ENCODE measurements at regions of chr17 and their contacts with region 1.

Region 1: GRCh38 chr17:2054512-2055291 is at the start of gene HIC1:
- DNase-seq: peak; percentile 65 to 76 (median 74)
- H3K4me3 ChIP-seq: peak within 1 kb of the TSS; percentile 7 to 78 (median 61)
- H3K4me3 Mint-ChIP-seq: peak within 1 kb of the TSS; percentile 67 to 82
- H3K27ac ChIP-seq: no peak within 1 kb of the TSS
- H3K27ac Mint-ChIP-seq: peak within 1 kb of the TSS in 2 of 7 donors; percentile 2 to 75
- H3K4me1 ChIP-seq: peaks cover 41 to 83% of the 10 kb centered on the region in 2 donors
- H3K4me1 Mint-ChIP-seq: peaks cover 33% of the 10 kb centered on the region
- H3K27me3 ChIP-seq: peaks cover 36 to 52% of the 10 kb centered on the region in 2 donors
- H3K27me3 Mint-ChIP-seq: peaks cover 35 to 75% (median 49%) of the 10 kb centered on the region in 3 donors
- CTCF ChIP-seq: peak; percentile 97
- polyA plus RNA-seq, gene HIC1: 0.13 to 14.2 (median 0.30) TPM

Region 2: GRCh38 chr17:2017274-2017941 is 37.3 kb before region 1 on chr17:
- intact Hi-C with region 1: no loop called
- DNase-seq: no peak
- H3K4me3 ChIP-seq: no peak overlapping the region
- H3K4me3 Mint-ChIP-seq: no peak overlapping the region
- H3K27ac ChIP-seq: no peak overlapping the region
- H3K27ac Mint-ChIP-seq: no peak overlapping the region
- H3K4me1 ChIP-seq: no peaks in the 10 kb centered on the region
- H3K4me1 Mint-ChIP-seq: peaks cover under 1% of the 10 kb centered on the region
- H3K27me3 ChIP-seq: peaks cover 2 to 25% of the 10 kb centered on the region in 2 donors
- H3K27me3 Mint-ChIP-seq: peaks cover 14 to 49% (median 32%) of the 10 kb centered on the region in 3 donors
- CTCF ChIP-seq: no peak

Region 3: DNA sequence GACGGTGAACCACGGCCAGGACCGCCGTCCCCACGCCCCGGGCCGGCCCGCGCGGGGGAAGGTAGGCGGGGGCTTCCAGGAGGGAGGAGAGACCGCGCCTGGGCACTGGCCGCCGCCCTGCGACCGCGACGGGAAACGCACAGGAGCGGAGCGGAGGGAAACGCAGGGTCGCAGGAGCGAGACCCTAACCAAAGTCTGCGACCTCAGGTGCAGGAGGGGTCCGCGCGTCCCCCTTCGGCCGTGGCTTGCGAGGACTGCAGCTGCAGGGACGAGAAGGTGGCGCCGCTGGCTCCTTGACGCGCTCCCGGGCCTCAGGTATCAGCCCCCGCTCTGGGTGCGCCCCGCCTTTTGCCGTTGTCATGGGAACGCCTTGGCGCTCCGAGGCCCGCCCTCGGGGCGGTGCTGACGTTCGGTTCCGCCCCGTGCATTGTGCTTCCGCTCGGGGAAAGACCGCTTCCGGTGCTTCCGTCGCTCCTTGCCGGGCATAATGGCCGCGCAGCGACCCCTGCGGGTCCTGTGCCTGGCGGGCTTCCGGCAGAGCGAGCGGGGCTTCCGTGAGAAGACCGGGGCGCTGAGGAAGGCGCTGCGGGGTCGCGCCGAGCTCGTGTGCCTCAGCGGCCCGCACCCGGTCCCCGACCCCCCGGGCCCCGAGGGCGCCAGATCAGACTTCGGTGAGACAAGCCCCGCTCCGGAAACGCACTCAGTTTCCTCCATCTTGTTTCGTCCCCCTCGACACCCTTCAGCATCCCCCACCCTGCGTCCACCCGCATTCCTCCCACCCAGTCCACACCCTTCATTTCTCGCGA is 12.9 kb before region 1 on chr17 and contains the start of gene OVCA2:
- intact Hi-C with region 1: no loop called
- DNase-seq: peak; percentile 89 to 91 (median 90)
- H3K4me3 ChIP-seq: peak within 1 kb of the TSS; percentile 72 to 88 (median 79)
- H3K4me3 Mint-ChIP-seq: peak within 1 kb of the TSS; percentile 89 to 96
- H3K27ac ChIP-seq: peak within 1 kb of the TSS; percentile 41 to 85
- H3K27ac Mint-ChIP-seq: peak within 1 kb of the TSS; percentile 76 to 98 (median 95)
- H3K4me1 ChIP-seq: peaks cover 15 to 18% of the 10 kb centered on the region in 2 donors
- H3K4me1 Mint-ChIP-seq: peaks cover 15% of the 10 kb centered on the region
- H3K27me3 ChIP-seq: no peaks in the 10 kb centered on the region
- H3K27me3 Mint-ChIP-seq: peaks cover 3 to 5% (median 4%) of the 10 kb centered on the region in 3 donors
- CTCF ChIP-seq: peak; percentile 41
- polyA plus RNA-seq, gene OVCA2: 30.5 to 94.9 (median 69.1) TPM

Region 4: GRCh38 chr17:2087597-2088211 is 33.0 kb after region 1 on chr17:
- intact Hi-C with region 1: loop called in 1 of 2 experiments (anchors 2 kb)
- DNase-seq: peak; percentile 96 to 99 (median 98)
- H3K4me3 ChIP-seq: peak overlapping the region in 1 of 3 experiments; percentile 74
- H3K4me3 Mint-ChIP-seq: peak overlapping the region; percentile 58 to 76
- H3K27ac ChIP-seq: peak overlapping the region; percentile 78 to 83
- H3K27ac Mint-ChIP-seq: peak overlapping the region; percentile 60 to 93 (median 89)
- H3K4me1 ChIP-seq: peaks cover 78 to 84% of the 10 kb centered on the region in 2 donors
- H3K4me1 Mint-ChIP-seq: peaks cover 82% of the 10 kb centered on the region
- H3K27me3 ChIP-seq: peaks cover 0 to 6% of the 10 kb centered on the region in 2 donors
- H3K27me3 Mint-ChIP-seq: peaks cover 11 to 35% (median 35%) of the 10 kb centered on the region in 3 donors
- CTCF ChIP-seq: no peak

Region 5: DNA sequence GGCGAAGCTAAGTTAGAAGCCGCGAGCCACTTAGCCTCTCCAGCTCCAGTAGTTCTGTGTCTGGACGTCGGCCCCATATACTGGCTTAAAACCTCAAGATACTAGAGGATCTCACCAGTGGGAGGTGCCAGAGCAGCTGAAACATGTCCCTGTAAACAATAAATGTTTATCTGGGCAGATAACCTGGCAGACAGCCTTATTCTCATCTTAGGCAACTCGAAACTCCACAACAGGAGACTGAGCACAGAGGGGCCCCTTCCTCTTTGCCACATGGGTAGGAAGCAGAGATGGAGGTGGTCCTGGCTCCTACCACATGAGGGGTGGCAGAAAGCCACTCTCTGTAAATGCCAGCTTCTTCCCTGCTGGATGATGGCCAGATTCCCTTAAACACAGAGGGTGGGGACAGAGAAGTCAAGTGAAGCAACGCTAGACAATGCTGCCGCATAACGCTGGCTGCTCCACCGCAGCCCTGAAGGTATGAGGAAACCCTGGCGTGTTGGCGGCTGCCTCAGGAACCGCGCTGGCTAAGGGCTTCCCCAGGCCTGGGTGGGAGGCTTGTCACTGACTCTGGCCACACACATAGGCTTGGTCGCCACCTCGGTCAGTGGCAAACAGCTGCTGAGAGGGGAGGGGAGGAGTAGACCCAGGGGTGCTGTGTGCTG is 68.1 kb after region 1 on chr17:
- intact Hi-C with region 1: loop called (anchors 5 kb)
- DNase-seq: peak; percentile 88 to 95 (median 91)
- H3K4me3 ChIP-seq: peak overlapping the region in 1 of 3 experiments; percentile 59
- H3K4me3 Mint-ChIP-seq: peak overlapping the region; percentile 59 to 92
- H3K27ac ChIP-seq: peak overlapping the region; percentile 57 to 85
- H3K27ac Mint-ChIP-seq: peak overlapping the region; percentile 71 to 95 (median 94)
- H3K4me1 ChIP-seq: peaks cover 52 to 54% of the 10 kb centered on the region in 2 donors
- H3K4me1 Mint-ChIP-seq: peaks cover 50% of the 10 kb centered on the region
- H3K27me3 ChIP-seq: no peaks in the 10 kb centered on the region
- H3K27me3 Mint-ChIP-seq: no peaks in the 10 kb centered on the region
- CTCF ChIP-seq: no peak

Region 6: GRCh38 chr17:2157675-2158395 is 103.1 kb after region 1 on chr17:
- intact Hi-C with region 1: loop called (anchors 5 to 10 kb)
- DNase-seq: peak; percentile 85 to 98 (median 95)
- H3K4me3 ChIP-seq: peak overlapping the region in 2 of 3 experiments; percentile 15 to 53
- H3K4me3 Mint-ChIP-seq: peak overlapping the region; percentile 48 to 67
- H3K27ac ChIP-seq: peak overlapping the region; percentile 64 to 95
- H3K27ac Mint-ChIP-seq: peak overlapping the region; percentile 92 to 99 (median 95)
- H3K4me1 ChIP-seq: peaks cover 38 to 42% of the 10 kb centered on the region in 2 donors
- H3K4me1 Mint-ChIP-seq: peaks cover 42% of the 10 kb centered on the region
- H3K27me3 ChIP-seq: no peaks in the 10 kb centered on the region
- H3K27me3 Mint-ChIP-seq: peaks cover 0 to 2% (median 2%) of the 10 kb centered on the region in 3 donors
- CTCF ChIP-seq: no peak

Region 7: GRCh38 chr17:2244545-2245525 is 190.1 kb after region 1 on chr17:
- intact Hi-C with region 1: loop called (anchors 1 kb)
- DNase-seq: peak; percentile 68 to 79 (median 77)
- H3K4me3 ChIP-seq: no peak overlapping the region
- H3K4me3 Mint-ChIP-seq: no peak overlapping the region
- H3K27ac ChIP-seq: no peak overlapping the region
- H3K27ac Mint-ChIP-seq: no peak overlapping the region
- H3K4me1 ChIP-seq: no peaks in the 10 kb centered on the region
- H3K4me1 Mint-ChIP-seq: no peaks in the 10 kb centered on the region
- H3K27me3 ChIP-seq: no peaks in the 10 kb centered on the region
- H3K27me3 Mint-ChIP-seq: no peaks in the 10 kb centered on the region
- CTCF ChIP-seq: peak; percentile 93

Region 8: DNA sequence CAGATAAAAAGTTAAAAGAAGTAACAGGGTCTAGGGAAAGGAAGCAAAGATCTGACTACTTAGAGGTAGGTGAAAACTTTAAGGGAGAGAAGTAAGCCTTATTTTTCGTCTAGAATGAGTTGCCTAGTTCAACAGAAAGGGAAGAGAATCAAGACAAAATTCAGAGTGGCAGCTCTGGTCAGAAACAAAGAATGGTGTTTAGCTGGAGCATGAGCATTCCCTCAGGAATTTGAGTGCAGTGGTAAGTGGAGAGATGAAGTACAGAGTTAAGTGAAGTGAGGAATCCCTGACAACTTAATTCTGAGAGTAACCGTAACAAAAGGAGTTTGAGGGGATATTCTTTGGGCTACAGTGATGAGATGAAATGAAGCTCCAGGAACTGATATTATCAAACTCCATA is 237.4 kb after region 1 on chr17:
- intact Hi-C with region 1: loop called in 1 of 2 experiments (anchors 5 kb)
- DNase-seq: no peak
- H3K4me3 ChIP-seq: no peak overlapping the region
- H3K4me3 Mint-ChIP-seq: no peak overlapping the region
- H3K27ac ChIP-seq: no peak overlapping the region
- H3K27ac Mint-ChIP-seq: no peak overlapping the region
- H3K4me1 ChIP-seq: no peaks in the 10 kb centered on the region
- H3K4me1 Mint-ChIP-seq: no peaks in the 10 kb centered on the region
- H3K27me3 ChIP-seq: no peaks in the 10 kb centered on the region
- H3K27me3 Mint-ChIP-seq: peaks cover 0 to 2% (median 0%) of the 10 kb centered on the region in 3 donors
- CTCF ChIP-seq: no peak

Region 9: GRCh38 chr17:2351269-2351668 is 296.6 kb after region 1 on chr17:
- intact Hi-C with region 1: loop called in 1 of 2 experiments (anchors 5 kb)
- DNase-seq: no peak
- H3K4me3 ChIP-seq: no peak overlapping the region
- H3K4me3 Mint-ChIP-seq: no peak overlapping the region
- H3K27ac ChIP-seq: no peak overlapping the region
- H3K27ac Mint-ChIP-seq: no peak overlapping the region
- H3K4me1 ChIP-seq: no peaks in the 10 kb centered on the region
- H3K4me1 Mint-ChIP-seq: no peaks in the 10 kb centered on the region
- H3K27me3 ChIP-seq: no peaks in the 10 kb centered on the region
- H3K27me3 Mint-ChIP-seq: peaks cover 0 to 1% (median 0%) of the 10 kb centered on the region in 3 donors
- CTCF ChIP-seq: no peak

Region 10: GRCh38 chr17:2500446-2500845 is 445.7 kb after region 1 on chr17:
- intact Hi-C with region 1: no loop called
- DNase-seq: no peak
- H3K4me3 ChIP-seq: no peak overlapping the region
- H3K4me3 Mint-ChIP-seq: no peak overlapping the region
- H3K27ac ChIP-seq: no peak overlapping the region
- H3K27ac Mint-ChIP-seq: peak overlapping the region in 1 of 7 donors; percentile 35
- H3K4me1 ChIP-seq: no peaks in the 10 kb centered on the region
- H3K4me1 Mint-ChIP-seq: no peaks in the 10 kb centered on the region
- H3K27me3 ChIP-seq: no peaks in the 10 kb centered on the region
- H3K27me3 Mint-ChIP-seq: no peaks in the 10 kb centered on the region
- CTCF ChIP-seq: no peak

Measured in CD14-positive monocyte (primary cell).